Mucosa of descending colon (tissue), 3 donors: ENCODE measurements at regions of chr7 and their contacts with region 1.

Region 1: GRCh38 chr7:86926732-86927131 is 132.7 kb downstream of the ELAPOR2 start:
- DNase-seq: peak in 1 of 3 donors; percentile 58
- ATAC-seq: peak; percentile 76
- H3K4me3 ChIP-seq: no peak overlapping the region
- H3K4me1 ChIP-seq: no peaks in the 10 kb centered on the region
- CTCF ChIP-seq: peak; percentile 45

Region 2: DNA sequence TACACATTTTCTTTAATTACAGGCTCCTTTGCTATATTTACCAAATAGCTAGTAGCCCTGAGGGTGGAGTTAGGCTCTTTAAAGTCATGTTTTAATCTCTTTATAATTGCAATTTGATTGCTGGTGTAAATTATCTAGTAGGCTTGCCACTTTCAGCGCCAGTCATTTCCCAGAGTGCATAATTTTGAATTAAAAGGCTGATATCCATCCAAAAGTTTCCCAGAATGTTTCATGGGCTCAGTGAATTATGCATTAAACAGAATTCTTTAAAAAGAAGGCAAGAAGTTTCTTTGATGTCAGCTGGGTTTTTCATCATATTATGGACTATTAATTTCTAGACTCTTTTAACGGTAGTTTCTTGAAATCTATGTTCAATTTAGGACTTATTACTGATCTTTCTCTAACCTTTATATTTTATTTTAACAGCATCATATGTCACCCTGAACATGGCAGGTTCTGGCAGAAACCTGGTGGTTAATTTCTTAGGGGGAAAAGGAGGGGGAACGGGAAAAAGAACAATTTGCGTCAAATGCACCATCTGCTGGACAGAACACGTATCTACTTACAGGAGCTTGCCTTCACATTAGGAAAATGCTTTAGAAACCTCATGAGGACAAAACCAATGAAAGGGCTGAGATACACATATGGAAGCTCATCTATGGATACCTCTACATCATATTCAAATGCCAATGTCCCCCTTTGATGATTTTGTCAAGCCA is 111.9 kb before region 1 on chr7:
- intact Hi-C with region 1: no loop called
- DNase-seq: no peak
- ATAC-seq: no peak
- H3K4me3 ChIP-seq: no peak overlapping the region
- H3K4me1 ChIP-seq: no peaks in the 10 kb centered on the region
- CTCF ChIP-seq: no peak

Region 3: GRCh38 chr7:86826575-86827347 is 100.0 kb before region 1 on chr7:
- intact Hi-C with region 1: no loop called
- DNase-seq: peak in 1 of 3 donors; percentile 12
- ATAC-seq: peak; percentile 26
- H3K4me3 ChIP-seq: no peak overlapping the region
- H3K4me1 ChIP-seq: no peaks in the 10 kb centered on the region
- CTCF ChIP-seq: no peak

Region 4: DNA sequence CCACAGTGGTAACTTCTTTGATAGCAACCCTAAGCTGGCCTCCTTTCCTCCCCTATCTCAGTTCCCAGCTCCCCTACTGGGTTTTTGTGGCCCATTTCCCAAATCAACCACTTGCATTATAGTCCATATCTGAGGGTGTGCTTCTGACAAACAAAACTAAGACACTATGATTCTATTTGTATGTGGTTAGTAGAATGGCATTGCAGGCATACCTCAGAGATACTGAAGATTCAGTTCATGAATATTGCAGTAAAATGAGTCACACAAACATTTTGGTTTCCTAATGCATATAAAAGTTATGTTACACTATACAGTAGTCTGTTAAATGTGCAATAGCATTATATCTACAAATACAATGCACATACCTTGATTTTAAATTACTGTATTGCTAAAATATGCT is 308.2 kb after region 1 on chr7:
- intact Hi-C with region 1: loop called in 1 of 2 experiments (anchors 5 kb)
- DNase-seq: no peak
- ATAC-seq: no peak
- H3K4me3 ChIP-seq: no peak overlapping the region
- H3K4me1 ChIP-seq: no peaks in the 10 kb centered on the region
- CTCF ChIP-seq: no peak

Region 5: GRCh38 chr7:87404674-87405073 is 477.9 kb after region 1 on chr7:
- intact Hi-C with region 1: no loop called
- DNase-seq: no peak
- ATAC-seq: no peak
- H3K4me3 ChIP-seq: no peak overlapping the region
- H3K4me1 ChIP-seq: no peaks in the 10 kb centered on the region
- CTCF ChIP-seq: no peak